ENCODE measurements at regions of chr19 and their contacts with region 1.

Region 1: DNA sequence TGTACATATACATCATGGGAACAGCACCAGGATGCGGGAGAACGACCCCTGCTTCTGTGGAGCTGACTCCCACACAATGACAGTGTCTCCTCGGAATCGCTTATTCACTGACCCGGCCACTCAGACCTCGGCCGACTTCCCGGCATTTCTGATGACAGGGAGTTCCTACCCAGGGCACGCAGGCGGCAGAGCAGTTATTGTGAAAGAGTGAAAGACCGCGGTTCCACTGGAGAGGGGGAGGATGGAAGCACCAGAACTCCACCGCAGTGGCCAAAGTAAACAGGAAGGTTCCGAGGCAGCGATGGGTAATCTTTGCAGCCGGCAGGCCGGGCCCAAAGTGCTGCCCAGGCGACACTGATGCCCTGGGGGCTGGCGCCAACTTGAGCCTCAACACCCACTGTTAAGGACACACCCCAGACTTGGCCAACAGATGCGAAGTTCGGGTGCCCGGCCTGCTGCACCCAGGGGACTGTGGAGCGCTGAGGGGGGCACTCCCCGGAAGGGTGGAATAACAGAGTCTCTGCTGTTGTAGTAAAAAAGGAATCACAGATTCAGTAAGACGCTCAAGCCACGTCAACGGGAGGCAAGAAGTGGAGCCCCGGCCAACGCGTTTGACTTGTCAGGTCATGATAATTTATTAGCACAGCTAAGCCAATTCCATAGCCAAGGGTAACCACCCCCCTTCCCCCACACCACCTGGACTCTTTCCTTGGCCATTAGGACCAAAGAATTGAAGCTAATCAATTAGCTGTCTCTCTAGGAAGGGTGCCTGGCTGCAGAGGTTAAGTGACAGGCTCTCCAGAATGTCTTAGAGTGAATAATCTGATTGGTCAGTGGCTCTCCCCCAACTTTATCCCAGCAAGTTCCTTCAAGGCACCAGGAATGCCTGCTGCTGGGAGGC is 5.8 kb downstream of the MLLT1 start:
- DNase-seq: no peak
- H3K4me3 ChIP-seq: no peak overlapping the region; a peak in 1 of 8 replicates
- H3K27ac ChIP-seq: no peak overlapping the region
- H3K4me1 ChIP-seq: peaks cover 6 to 49% (median 23%) of the 10 kb centered on the region in 4 experiments
- H3K27me3 ChIP-seq: no peaks in the 10 kb centered on the region; a peak in 1 of 7 replicates
- CTCF ChIP-seq: no peak
- EP300 ChIP-seq: no peak
- POLR2A ChIP-seq: no peak
- RAD21 ChIP-seq: no peak

Region 2: GRCh38 chr19:6238643-6239281 is 35.2 kb before region 1 on chr19:
- CTCF ChIA-PET with region 1: interaction called, 14 read pairs
- POLR2A ChIA-PET with region 1: interaction called, 3 read pairs
- DNase-seq: no peak
- H3K4me3 ChIP-seq: no peak overlapping the region
- H3K27ac ChIP-seq: no peak overlapping the region
- H3K4me1 ChIP-seq: peaks cover 0 to 12% (median 1%) of the 10 kb centered on the region in 4 experiments; a peak in 3 of 7 replicates
- H3K27me3 ChIP-seq: no peaks in the 10 kb centered on the region; a peak in 1 of 7 replicates
- CTCF ChIP-seq: no peak
- EP300 ChIP-seq: no peak
- POLR2A ChIP-seq: no peak
- RAD21 ChIP-seq: no peak

Region 3: GRCh38 chr19:6340493-6341201 is 66.7 kb after region 1 on chr19:
- CTCF ChIA-PET with region 1: no interaction called
- POLR2A ChIA-PET with region 1: no interaction called
- DNase-seq: no peak
- H3K4me3 ChIP-seq: no peak overlapping the region
- H3K27ac ChIP-seq: no peak overlapping the region
- H3K4me1 ChIP-seq: no peaks in the 10 kb centered on the region
- H3K27me3 ChIP-seq: no peaks in the 10 kb centered on the region
- CTCF ChIP-seq: peak in 1 of 3 experiments; percentile 9; a peak in 1 of 4 replicates
- EP300 ChIP-seq: no peak
- POLR2A ChIP-seq: no peak
- RAD21 ChIP-seq: no peak

Measured in H1 (cell line).